ENCODE measurements at regions of chr2 and their contacts with region 1.

Region 1: GRCh38 chr2:71798266-71799012 is 345.1 kb downstream of the DYSF start:
- DNase-seq: no peak
- H3K4me3 ChIP-seq: no peak overlapping the region
- H3K27ac ChIP-seq: no peak overlapping the region
- H3K27me3 ChIP-seq: peaks cover 5% of the 10 kb centered on the region
- CTCF ChIP-seq: peak; percentile 74

Region 2: GRCh38 chr2:71702971-71703903 is 95.2 kb before region 1 on chr2:
- CTCF ChIA-PET with region 1: interaction called, 12 read pairs
- POLR2A ChIA-PET with region 1: no interaction called
- DNase-seq: no peak
- H3K4me3 ChIP-seq: no peak overlapping the region
- H3K27ac ChIP-seq: no peak overlapping the region
- H3K27me3 ChIP-seq: peaks cover 15% of the 10 kb centered on the region
- CTCF ChIP-seq: no peak

Region 3: GRCh38 chr2:71778936-71779773 is 19.3 kb before region 1 on chr2:
- CTCF ChIA-PET with region 1: interaction called, 34 read pairs
- POLR2A ChIA-PET with region 1: no interaction called
- DNase-seq: peak; percentile 39
- H3K4me3 ChIP-seq: no peak overlapping the region
- H3K27ac ChIP-seq: peak overlapping the region; percentile 70
- H3K27me3 ChIP-seq: peaks cover 7% of the 10 kb centered on the region
- CTCF ChIP-seq: peak; percentile 45

Region 4: GRCh38 chr2:71812736-71813135 is 14.3 kb after region 1 on chr2:
- CTCF ChIA-PET with region 1: interaction called, 10 read pairs
- POLR2A ChIA-PET with region 1: no interaction called
- DNase-seq: no peak
- H3K4me3 ChIP-seq: no peak overlapping the region
- H3K27ac ChIP-seq: no peak overlapping the region
- H3K27me3 ChIP-seq: peaks cover 25% of the 10 kb centered on the region
- CTCF ChIP-seq: no peak

Measured in AG04450 (cell line).